MCF 10A (cell line): ENCODE measurements at regions of chr12 and their contacts with region 1.

Region 1: DNA sequence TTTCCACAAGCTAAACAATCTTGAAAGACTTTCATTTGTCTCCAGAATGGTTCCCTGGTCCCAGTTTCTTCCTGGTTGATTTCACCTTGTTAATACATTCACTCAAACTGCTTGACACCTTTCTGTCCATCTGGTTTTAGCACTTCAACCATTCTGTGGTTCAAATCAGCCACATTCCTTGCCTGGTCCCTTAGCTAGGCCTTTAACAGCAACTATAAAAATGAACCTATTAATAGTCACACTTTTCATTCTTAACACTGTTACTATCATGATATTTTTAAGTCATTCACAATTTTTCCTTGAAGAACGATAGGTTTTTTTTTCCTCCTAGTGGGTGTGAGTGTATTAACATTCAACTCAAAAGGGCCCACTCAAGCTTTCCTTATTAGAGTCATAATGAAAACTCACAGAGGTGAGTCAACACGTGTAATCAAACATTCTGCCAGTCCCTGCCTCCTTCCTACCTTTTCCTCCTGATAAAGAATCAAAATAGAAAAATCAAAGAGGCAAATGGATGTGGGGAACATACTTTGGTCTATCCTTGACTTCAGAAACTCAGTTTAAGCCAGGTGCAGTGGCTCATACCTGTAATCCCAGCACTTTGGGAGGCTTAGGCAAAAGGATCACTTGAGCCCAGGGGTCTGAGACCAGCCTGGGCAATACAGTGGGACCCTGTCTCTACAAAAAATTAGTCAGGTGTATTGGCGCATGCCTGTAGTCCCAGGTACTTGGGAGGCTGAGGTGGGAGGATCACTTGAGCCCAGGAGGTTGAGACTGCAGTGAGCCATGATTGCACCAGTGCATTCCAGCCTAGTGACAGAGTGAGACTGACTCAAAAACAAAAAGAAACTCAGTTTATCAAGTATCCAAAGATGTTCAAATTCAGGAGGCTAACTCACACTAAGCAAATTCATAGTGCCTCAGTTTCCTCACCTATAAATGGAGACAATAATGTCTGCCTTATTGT is 34.5 kb upstream of the CCNT1 start:
- DNase-seq: no peak
- H3K4me3 Mint-ChIP-seq: no peak overlapping the region
- H3K27ac Mint-ChIP-seq: no peak overlapping the region
- H3K4me1 Mint-ChIP-seq: no peaks in the 10 kb centered on the region
- H3K27me3 Mint-ChIP-seq: peaks cover 10% of the 10 kb centered on the region
- CTCF ChIP-seq: no peak

Region 2: GRCh38 chr12:48542300-48542928 is 208.6 kb before region 1 on chr12:
- CTCF ChIA-PET with region 1: no interaction called
- POLR2A ChIA-PET with region 1: no interaction called
- intact Hi-C with region 1: loop called (anchors 5 kb)
- DNase-seq: peak; percentile 73
- H3K4me3 Mint-ChIP-seq: no peak overlapping the region
- H3K27ac Mint-ChIP-seq: no peak overlapping the region
- H3K4me1 Mint-ChIP-seq: peaks cover 6% of the 10 kb centered on the region
- H3K27me3 Mint-ChIP-seq: peaks cover 18% of the 10 kb centered on the region
- CTCF ChIP-seq: peak; percentile 65

Region 3: GRCh38 chr12:48716493-48717251 is 34.4 kb before region 1 on chr12 and contains the start of gene CCNT1:
- CTCF ChIA-PET with region 1: no interaction called
- POLR2A ChIA-PET with region 1: no interaction called
- intact Hi-C with region 1: no loop called
- DNase-seq: peak; percentile 100
- H3K4me3 Mint-ChIP-seq: peak within 1 kb of the TSS; percentile 92
- H3K27ac Mint-ChIP-seq: peak within 1 kb of the TSS; percentile 99
- H3K4me1 Mint-ChIP-seq: peaks cover 14% of the 10 kb centered on the region
- H3K27me3 Mint-ChIP-seq: no peaks in the 10 kb centered on the region
- CTCF ChIP-seq: no peak
- total RNA-seq, gene CCNT1: 54.3 and 55.1 TPM in 2 replicates

Region 4: DNA sequence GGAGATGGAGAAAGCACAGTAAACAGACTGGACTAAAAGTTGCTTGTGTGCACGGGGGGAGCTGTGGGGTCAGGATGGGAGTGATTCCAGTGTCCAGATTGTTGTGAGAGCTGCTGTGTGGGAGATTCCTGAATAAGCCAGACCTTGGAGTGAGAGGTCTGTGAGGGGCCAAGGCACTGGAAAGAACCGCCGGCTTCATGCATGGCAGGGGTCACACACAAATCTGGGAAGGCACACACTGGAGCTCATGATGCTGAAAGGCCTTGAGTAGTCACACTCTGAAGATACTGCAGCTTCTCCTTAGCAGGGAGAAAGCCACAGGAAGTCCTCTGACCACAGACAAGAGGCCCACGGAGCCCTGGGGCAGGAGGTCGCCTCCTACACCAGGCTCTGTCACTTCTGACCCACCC is 14.7 kb after region 1 on chr12:
- CTCF ChIA-PET with region 1: interaction called, 30 read pairs
- POLR2A ChIA-PET with region 1: no interaction called
- intact Hi-C with region 1: no loop called
- DNase-seq: no peak
- H3K4me3 Mint-ChIP-seq: no peak overlapping the region
- H3K27ac Mint-ChIP-seq: no peak overlapping the region
- H3K4me1 Mint-ChIP-seq: no peaks in the 10 kb centered on the region
- H3K27me3 Mint-ChIP-seq: no peaks in the 10 kb centered on the region
- CTCF ChIP-seq: no peak

Region 5: GRCh38 chr12:49200919-49201594 is 450.0 kb after region 1 on chr12:
- CTCF ChIA-PET with region 1: no interaction called
- POLR2A ChIA-PET with region 1: no interaction called
- intact Hi-C with region 1: no loop called
- DNase-seq: peak; percentile 83
- H3K4me3 Mint-ChIP-seq: no peak overlapping the region
- H3K27ac Mint-ChIP-seq: peak overlapping the region; percentile 77
- H3K4me1 Mint-ChIP-seq: peaks cover 16% of the 10 kb centered on the region
- H3K27me3 Mint-ChIP-seq: no peaks in the 10 kb centered on the region
- CTCF ChIP-seq: no peak